Psoas muscle (tissue), 8 donors: ENCODE measurements at regions of chr11 and their contacts with region 1.

Region 1: DNA sequence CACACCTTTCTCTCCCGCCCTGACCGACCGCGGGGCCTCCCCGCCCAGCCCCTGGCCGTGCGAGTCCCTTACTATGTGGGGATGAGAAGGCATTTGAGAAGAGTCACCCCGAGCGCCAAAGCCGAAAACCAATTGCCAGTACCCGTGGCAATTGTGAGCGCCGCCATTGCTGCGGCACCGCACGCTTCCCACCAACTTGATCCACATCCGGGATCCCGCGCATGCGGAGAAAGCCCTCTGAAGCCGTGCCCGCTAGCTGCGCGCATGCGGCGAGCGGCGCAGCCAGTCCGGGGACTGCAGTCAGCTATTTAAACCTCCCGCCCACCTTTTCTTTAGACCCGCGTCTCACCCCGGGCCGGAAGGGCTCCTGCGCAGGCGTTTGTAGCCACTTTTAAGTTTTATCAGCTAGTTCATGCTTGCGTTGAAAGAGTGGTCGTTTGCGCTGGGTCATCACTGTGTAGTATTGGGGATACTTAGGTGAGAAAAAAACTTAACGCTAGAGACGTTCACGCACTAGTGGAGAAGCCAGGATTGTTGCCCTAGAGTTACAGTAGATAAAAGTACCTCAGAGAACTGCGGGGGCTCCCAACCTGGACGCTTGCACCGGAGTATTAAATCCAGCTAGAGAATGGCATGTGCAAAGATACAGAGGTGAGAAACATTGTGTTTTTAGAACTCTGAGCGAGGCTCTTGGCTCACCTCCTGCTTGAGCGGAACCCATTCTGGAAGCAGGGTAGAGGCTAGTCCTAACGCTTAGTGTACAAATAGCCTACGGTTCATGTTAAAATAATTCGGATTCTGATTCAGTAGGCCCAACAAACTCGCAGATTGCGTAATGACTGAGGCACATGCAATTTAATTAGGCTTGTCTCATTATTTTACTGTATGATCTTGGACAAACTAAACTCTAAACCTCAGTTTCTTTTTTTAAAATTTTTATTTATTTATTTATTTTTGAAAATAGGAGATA is at the start of gene ALG8:
- DNase-seq: peak; percentile 96 to 98
- ATAC-seq: peak; percentile 99 to 100 (median 100)
- H3K4me3 ChIP-seq: peak within 1 kb of the TSS; percentile 90
- H3K27ac ChIP-seq: peak within 1 kb of the TSS; percentile 82
- H3K4me1 ChIP-seq: peaks cover 15% of the 10 kb centered on the region
- H3K27me3 ChIP-seq: no peaks in the 10 kb centered on the region
- CTCF ChIP-seq: no peak
- total RNA-seq, gene ALG8: 9.1 to 15.7 (median 12.2) TPM

Region 2: GRCh38 chr11:78079232-78080083 is 60.2 kb before region 1 on chr11 and contains the start of gene NDUFC2:
- intact Hi-C with region 1: loop called in 1 of 2 experiments (anchors 5 kb)
- DNase-seq: peak; percentile 82 to 90
- ATAC-seq: peak; percentile 94 to 98 (median 96)
- H3K4me3 ChIP-seq: peak within 1 kb of the TSS; percentile 81
- H3K27ac ChIP-seq: peak within 1 kb of the TSS; percentile 79
- H3K4me1 ChIP-seq: peaks cover 35% of the 10 kb centered on the region
- H3K27me3 ChIP-seq: no peaks in the 10 kb centered on the region
- CTCF ChIP-seq: no peak
- total RNA-seq, gene NDUFC2: 223 to 309 (median 252) TPM

Region 3: GRCh38 chr11:78161962-78162371 is 22.3 kb after region 1 on chr11:
- intact Hi-C with region 1: no loop called
- DNase-seq: peak in 1 of 2 donors; percentile 40
- ATAC-seq: no peak
- H3K4me3 ChIP-seq: no peak overlapping the region
- H3K27ac ChIP-seq: no peak overlapping the region
- H3K4me1 ChIP-seq: no peaks in the 10 kb centered on the region
- H3K27me3 ChIP-seq: no peaks in the 10 kb centered on the region
- CTCF ChIP-seq: no peak

Region 4: DNA sequence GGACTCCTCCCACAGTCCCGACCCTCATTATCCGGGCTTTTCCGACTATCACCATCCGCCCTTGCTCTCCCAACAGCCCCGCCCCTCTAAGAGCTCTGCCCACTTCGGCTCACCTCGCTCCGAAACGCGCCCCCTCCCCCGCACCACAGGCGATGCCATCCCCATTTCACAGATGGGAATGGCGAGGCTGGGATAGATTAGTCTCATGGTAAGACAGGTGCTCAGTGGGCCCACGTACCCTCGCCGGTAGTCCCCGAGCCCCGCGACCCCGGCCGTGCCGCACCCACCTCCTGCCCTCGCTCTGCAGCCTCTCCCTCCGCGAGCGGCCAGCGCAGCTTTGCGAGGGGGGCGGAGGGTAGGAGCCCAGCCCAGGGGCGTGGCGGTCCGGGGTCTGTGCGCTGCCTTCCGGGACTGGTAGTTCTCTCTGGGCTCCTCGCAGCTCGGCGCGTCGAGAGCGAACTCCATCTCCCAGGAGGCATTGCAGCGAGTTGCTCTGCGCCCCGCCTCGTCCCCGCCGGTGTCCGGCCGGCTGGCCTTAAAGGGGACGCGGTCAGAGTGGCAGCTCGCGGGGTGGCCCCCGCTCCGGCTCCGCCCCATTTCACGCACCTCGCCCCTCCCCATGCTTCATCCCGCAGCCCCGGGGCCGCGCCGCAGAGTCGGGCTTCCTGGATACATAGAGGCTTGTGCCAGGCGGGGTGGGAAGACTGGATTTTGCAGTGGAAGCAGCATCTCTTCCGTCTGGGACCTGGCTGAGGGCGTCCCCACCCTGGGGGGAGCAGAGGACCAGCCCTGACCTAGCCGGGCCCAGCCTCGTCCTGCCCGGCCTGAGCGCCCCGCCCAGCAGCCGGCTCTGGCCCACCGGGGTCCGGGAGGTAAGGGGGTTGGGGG is 48.8 kb after region 1 on chr11 and contains the starts of genes KCTD21 and USP35:
- intact Hi-C with region 1: loop called (anchors 5 kb)
- DNase-seq: peak; percentile 97 to 99
- ATAC-seq: peak; percentile 95 to 98 (median 96)
- H3K4me3 ChIP-seq: peak within 1 kb of the TSS; percentile 98
- H3K27ac ChIP-seq: peak within 1 kb of the TSS; percentile 79
- H3K4me1 ChIP-seq: peaks cover 41% of the 10 kb centered on the region
- H3K27me3 ChIP-seq: no peaks in the 10 kb centered on the region
- CTCF ChIP-seq: no peak
- total RNA-seq, gene KCTD21: 4.7 to 7.0 (median 5.8) TPM
- total RNA-seq, gene USP35: 2.0 to 4.4 (median 3.5) TPM

Region 5: DNA sequence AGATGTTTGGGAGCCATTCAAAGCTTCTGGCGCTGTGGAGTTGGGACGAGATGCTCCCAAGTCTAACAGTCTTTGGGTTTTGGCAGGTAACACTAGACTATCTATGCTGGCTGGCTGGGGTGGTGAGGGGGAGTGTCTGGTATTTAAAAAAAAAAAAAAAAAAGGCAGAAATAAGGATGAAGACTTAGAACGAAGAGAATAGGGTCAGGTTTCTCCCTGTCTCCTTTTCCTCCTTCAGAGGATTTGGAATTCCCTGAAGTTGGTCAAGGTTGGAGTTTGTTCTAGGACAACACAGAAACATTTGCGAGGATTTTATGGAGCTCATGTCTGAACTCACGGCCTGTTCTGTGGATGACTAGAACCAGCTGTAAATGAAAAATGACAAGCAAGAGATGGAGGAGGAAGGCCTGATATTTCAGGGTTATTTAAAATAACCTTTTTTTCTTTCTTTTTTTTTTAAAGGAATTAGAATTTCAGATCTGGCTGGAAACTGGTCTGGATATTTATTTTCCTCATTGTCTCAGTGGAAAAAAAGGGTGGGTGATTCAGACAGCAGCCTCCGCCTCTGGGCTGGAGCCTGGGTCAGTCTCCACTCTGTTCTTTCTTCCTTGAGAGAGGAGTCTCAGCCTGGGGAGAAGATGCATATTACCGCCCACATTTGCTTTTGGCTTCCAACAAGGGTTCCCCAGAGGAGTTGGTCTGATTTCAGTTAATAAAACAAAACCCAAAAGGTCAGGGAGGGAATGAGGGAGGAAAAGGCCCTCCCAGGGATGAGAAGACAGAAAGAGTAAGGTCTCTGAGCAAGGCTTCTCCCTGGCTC is 129.1 kb after region 1 on chr11:
- intact Hi-C with region 1: no loop called
- DNase-seq: peak; percentile 39 to 59
- ATAC-seq: peak in 3 of 4 donors; percentile 51 to 60 (median 56)
- H3K4me3 ChIP-seq: no peak overlapping the region
- H3K27ac ChIP-seq: peak overlapping the region; percentile 5
- H3K4me1 ChIP-seq: no peaks in the 10 kb centered on the region
- H3K27me3 ChIP-seq: no peaks in the 10 kb centered on the region
- CTCF ChIP-seq: no peak

Region 6: DNA sequence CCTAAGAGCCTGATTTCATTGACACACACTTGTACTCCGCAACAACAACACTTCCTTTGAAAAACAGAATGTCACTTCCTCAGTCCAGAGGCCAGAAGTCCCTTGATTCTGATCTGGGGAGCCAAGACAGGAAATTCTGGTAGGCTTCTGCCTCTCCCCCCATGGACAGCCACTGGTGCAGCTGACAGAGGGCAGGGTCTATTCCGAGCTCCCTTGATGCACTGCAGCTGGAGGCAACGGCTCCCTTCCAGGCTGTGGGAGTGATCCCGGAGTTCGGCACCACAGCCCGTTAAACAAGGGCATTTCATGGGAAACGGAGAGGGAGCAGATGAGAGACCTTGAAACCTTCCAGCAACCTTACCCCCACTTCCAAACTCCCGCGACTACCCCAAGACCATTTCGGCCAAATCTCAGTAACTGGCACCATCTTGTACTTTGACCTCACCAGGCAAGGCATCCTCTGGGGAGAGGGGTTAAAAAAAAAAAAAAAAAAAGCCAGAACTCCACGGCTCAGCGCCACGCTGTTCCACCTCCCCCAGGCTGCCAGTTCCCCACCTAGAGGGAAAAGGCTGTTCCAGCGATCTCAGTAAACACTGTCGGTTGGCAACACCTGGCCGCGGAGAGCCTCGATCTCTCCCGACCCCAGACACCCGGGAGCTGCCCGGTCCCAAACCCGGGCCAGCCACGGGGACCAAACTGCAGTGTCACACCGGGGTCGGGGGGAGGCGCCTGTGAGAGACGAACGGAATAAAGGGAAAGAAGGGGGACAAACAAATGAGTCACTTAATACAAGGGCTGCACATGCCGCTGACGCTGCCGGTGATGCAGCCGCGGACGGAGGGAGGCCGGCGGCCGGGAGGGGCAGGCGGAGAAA is 276.8 kb after region 1 on chr11:
- intact Hi-C with region 1: loop called in 1 of 2 experiments (anchors 10 kb)
- DNase-seq: peak; percentile 88 to 91
- ATAC-seq: peak; percentile 75 to 84 (median 78)
- H3K4me3 ChIP-seq: peak overlapping the region; percentile 81
- H3K27ac ChIP-seq: peak overlapping the region; percentile 86
- H3K4me1 ChIP-seq: peaks cover 18% of the 10 kb centered on the region
- H3K27me3 ChIP-seq: no peaks in the 10 kb centered on the region
- CTCF ChIP-seq: peak; percentile 36

Region 7: GRCh38 chr11:78564490-78565467 is 425.1 kb after region 1 on chr11:
- intact Hi-C with region 1: loop called in 1 of 2 experiments (anchors 10 kb)
- DNase-seq: no peak
- ATAC-seq: peak in 2 of 4 donors; percentile 58 to 82
- H3K4me3 ChIP-seq: no peak overlapping the region
- H3K27ac ChIP-seq: no peak overlapping the region
- H3K4me1 ChIP-seq: peaks cover 6% of the 10 kb centered on the region
- H3K27me3 ChIP-seq: no peaks in the 10 kb centered on the region
- CTCF ChIP-seq: peak; percentile 82